Mammary epithelial cell (primary cell): ENCODE measurements at regions of chr5 and their contacts with region 1.

Region 1: DNA sequence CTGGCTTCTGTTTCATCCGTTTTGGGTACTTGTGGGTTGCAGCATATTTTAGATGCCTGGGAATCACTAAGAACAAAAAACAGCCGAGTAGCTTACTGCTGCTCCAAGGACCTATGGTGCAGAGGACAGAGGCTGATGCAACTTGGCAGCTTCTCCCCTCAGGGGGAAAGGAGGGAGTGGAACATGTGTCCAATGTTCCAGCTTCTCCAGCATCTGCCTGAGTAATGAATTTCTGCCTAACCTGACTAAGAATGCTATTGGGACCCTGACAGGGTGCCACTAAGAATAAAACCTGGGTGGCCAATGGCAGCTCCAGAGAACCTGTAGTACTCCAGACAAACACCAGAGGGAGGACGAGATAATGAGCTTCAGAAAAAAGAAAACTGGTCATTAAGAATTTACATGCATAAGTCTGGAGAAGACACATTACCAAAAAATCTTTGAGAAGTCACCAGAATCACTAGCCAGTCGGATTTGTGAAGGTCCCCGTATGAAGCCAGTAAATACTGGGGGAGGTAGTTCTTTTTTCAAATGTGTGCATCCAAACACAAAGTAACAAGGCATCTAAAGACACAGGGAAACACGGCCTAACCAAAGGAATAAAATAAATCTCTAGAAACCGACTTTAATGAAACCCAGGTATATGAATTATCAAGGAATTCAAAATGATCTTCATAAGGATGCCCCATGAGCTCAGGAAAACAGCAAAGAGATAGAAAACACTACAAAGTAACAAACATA is 293.5 kb downstream of the HINT1 start:
- DNase-seq: peak; percentile 17
- H3K4me3 ChIP-seq: no peak overlapping the region
- H3K27ac ChIP-seq: no peak overlapping the region
- H3K4me1 ChIP-seq: no peaks in the 10 kb centered on the region
- H3K27me3 ChIP-seq: no peaks in the 10 kb centered on the region
- CTCF ChIP-seq: peak; percentile 59 to 71

Region 2: GRCh38 chr5:130109152-130109551 is 762.4 kb before region 1 on chr5:
- CTCF ChIA-PET with region 1: no interaction called
- dilution Hi-C with region 1: no loop called
- in situ Hi-C with region 1: no loop called
- intact Hi-C with region 1: loop called (anchors 2 kb)
- DNase-seq: peak; percentile 30
- H3K4me3 ChIP-seq: no peak overlapping the region
- H3K27ac ChIP-seq: no peak overlapping the region
- H3K4me1 ChIP-seq: no peaks in the 10 kb centered on the region
- H3K27me3 ChIP-seq: no peaks in the 10 kb centered on the region
- CTCF ChIP-seq: peak; percentile 48 to 70

Region 3: DNA sequence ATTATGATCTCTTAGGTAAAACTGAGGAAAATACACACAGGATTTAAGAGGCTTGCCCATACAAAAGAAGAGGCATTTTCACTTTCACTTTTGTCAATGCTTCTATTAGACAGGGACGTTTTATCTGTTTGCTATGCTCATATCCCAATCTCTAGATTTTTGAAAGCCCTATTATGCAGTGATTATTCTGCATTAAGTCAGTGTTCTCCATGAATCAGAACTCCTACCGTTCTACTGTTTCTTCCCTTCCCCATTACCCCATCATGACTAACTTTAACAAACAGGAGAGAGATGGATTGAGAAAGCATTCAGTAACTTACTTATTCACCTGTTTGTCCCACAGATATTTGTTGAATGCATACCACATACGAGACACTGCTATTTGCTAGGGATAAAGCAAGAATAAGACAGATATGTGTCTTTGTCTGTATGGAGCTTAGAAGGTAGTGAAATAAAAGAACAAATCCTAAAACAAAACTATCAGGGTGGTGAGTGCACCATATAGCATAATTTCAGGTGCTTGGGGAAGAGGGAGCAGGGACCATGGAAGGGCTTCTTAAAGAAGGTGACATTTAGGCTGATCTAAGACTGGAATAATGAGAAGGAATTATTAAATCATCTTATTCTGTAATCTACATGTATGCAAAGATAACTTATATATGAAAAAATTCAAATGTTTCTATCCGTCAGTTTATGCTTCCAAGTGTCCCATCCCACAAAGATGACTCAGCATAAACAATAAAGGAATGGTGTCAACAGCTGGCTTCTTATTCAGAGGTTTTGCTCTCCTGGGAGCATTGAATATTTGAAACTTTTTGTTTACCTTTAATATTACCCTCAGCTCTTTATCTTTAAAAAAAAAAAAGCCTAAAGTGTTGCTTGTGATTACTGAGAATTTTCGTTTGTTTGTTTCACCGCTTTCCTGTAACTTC is 34.5 kb before region 1 on chr5:
- CTCF ChIA-PET with region 1: no interaction called
- dilution Hi-C with region 1: no loop called
- in situ Hi-C with region 1: no loop called
- intact Hi-C with region 1: no loop called
- DNase-seq: peak; percentile 43
- H3K4me3 ChIP-seq: peak overlapping the region in 2 of 3 experiments; percentile 25 to 32
- H3K27ac ChIP-seq: no peak overlapping the region
- H3K4me1 ChIP-seq: no peaks in the 10 kb centered on the region
- H3K27me3 ChIP-seq: no peaks in the 10 kb centered on the region
- CTCF ChIP-seq: no peak

Region 4: DNA sequence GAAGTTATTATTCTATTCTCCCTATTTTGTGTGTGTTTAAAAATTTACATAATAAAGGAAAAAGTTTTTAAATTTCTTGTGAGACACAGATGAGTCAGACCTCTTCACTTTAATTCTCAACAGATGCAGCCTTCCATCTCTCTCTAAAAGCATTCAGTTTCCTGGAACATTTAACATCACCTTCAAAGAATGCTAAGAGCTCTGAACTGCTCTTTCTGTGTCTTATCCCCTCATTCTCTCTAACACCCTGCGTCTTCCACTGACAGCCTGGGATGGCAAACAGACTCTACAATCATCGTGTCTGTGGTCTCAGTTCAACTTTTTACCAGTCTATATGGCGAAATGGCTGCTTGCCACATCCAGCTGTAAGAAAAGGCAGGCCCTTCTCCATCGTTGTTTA is 120.6 kb after region 1 on chr5:
- CTCF ChIA-PET with region 1: interaction called, 20 read pairs
- dilution Hi-C with region 1: no loop called
- in situ Hi-C with region 1: no loop called
- intact Hi-C with region 1: no loop called
- DNase-seq: no peak
- H3K4me3 ChIP-seq: no peak overlapping the region
- H3K27ac ChIP-seq: no peak overlapping the region
- H3K4me1 ChIP-seq: no peaks in the 10 kb centered on the region
- H3K27me3 ChIP-seq: no peaks in the 10 kb centered on the region
- CTCF ChIP-seq: no peak

Region 5: DNA sequence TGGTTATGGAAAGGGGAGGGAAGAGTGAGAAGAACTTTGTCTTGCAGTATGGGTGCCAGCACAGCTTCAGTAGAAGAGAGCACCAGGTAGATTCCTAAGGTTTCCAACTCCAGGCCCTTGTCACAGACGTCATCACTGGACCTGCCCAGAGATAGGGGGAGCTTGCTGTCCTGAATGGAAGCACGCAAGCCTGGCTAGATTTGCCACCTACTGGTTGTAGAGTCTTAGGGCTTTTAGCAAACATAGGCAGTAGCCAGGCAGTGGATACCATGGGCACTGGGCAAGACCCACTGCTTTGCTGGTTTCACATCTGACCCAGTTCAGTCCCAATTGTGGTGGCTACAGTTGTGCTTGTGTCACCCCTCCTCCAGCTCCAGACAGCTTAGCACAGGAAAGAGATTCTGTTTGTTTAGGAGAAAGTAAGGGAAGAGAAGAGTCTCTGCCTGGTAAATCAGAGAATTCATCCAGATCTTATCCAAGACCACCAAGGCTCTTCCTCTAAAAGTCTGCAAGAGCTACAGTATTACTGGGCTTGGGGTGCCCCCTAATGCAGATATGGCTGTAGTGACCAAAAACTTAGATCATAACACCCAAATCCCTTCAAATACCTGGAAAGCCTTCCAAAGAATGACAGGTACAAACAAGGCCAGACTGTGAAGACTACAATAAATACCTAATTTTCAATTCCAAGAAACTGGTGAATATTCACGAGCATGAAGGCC is 134.6 kb after region 1 on chr5:
- CTCF ChIA-PET with region 1: no interaction called
- dilution Hi-C with region 1: no loop called
- in situ Hi-C with region 1: no loop called
- intact Hi-C with region 1: loop called (anchors 1 kb)
- DNase-seq: peak; percentile 10
- H3K4me3 ChIP-seq: no peak overlapping the region
- H3K27ac ChIP-seq: no peak overlapping the region
- H3K4me1 ChIP-seq: no peaks in the 10 kb centered on the region
- H3K27me3 ChIP-seq: peaks cover 6% of the 10 kb centered on the region
- CTCF ChIP-seq: peak in 1 of 2 donors; percentile 33